Activated CD8-positive, alpha-beta T cell treated with anti-CD3 and anti-CD28 coated beads for 36 hours (primary cell): ENCODE measurements at regions of chr14 and their contacts with region 1.

Region 1: DNA sequence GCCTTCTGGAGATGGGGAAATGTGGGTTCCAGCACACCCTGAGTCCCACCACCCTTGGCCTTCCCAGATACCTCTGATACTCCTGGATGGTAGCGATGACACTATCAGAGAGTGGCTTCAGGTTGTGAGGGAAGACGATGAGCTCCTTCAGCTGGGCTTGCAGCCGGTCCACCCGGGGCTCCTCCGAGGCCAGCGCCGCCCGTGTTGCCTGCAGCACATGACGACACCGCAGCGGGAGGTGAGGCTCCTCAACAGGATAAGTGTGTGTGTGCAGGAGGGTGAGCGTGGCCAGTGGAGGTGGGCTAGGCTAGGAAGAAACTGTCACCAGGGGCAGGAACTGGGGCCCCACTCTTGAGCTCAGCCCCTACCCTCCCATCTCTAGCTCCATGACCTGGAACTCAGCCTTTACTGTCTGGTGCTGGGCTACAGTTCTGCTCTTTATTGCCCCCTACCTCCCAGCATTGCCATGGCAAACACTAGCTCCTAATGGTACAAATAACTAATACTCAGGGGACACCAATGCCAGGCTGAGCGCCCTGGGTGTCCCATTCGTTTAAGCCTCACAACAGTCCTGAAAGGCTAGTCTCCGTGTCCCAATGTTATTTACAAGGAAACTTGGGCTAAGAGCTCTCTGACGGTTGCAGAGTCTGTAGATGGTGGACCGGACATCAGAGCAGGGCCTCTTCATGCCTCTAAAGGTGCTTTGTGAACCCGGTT is 64.1 kb downstream of the SYNE3 start:
- DNase-seq: no peak
- ATAC-seq: peak; percentile 53
- H3K4me3 Mint-ChIP-seq: no peak overlapping the region
- H3K27ac Mint-ChIP-seq: no peak overlapping the region
- H3K4me1 Mint-ChIP-seq: no peaks in the 10 kb centered on the region
- H3K27me3 Mint-ChIP-seq: no peaks in the 10 kb centered on the region
- CTCF ChIP-seq: peak; percentile 37

Region 2: GRCh38 chr14:95434121-95434520 is 18.2 kb before region 1 on chr14:
- CTCF ChIA-PET with region 1: interaction called, 12 read pairs
- POLR2A ChIA-PET with region 1: interaction called, 3 read pairs
- intact Hi-C with region 1: no loop called
- DNase-seq: no peak
- ATAC-seq: no peak
- H3K4me3 Mint-ChIP-seq: no peak overlapping the region
- H3K27ac Mint-ChIP-seq: no peak overlapping the region
- H3K4me1 Mint-ChIP-seq: no peaks in the 10 kb centered on the region
- H3K27me3 Mint-ChIP-seq: no peaks in the 10 kb centered on the region
- CTCF ChIP-seq: no peak

Region 3: GRCh38 chr14:95850417-95850816 is 398.1 kb after region 1 on chr14:
- CTCF ChIA-PET with region 1: no interaction called
- POLR2A ChIA-PET with region 1: no interaction called
- intact Hi-C with region 1: no loop called
- DNase-seq: no peak
- ATAC-seq: no peak
- H3K4me3 Mint-ChIP-seq: no peak overlapping the region
- H3K27ac Mint-ChIP-seq: no peak overlapping the region
- H3K4me1 Mint-ChIP-seq: no peaks in the 10 kb centered on the region
- H3K27me3 Mint-ChIP-seq: peaks cover 29% of the 10 kb centered on the region
- CTCF ChIP-seq: no peak